ENCODE measurements at regions of chr19 and their contacts with region 1.

Region 1: GRCh38 chr19:9934132-9934950 is 2.0 kb downstream of the OLFM2 start:
- DNase-seq: peak; percentile 74 to 75 (median 74)
- ATAC-seq: peak; percentile 98
- H3K4me3 ChIP-seq: no peak overlapping the region
- H3K4me1 ChIP-seq: peaks cover 13% of the 10 kb centered on the region
- CTCF ChIP-seq: peak; percentile 63

Region 2: DNA sequence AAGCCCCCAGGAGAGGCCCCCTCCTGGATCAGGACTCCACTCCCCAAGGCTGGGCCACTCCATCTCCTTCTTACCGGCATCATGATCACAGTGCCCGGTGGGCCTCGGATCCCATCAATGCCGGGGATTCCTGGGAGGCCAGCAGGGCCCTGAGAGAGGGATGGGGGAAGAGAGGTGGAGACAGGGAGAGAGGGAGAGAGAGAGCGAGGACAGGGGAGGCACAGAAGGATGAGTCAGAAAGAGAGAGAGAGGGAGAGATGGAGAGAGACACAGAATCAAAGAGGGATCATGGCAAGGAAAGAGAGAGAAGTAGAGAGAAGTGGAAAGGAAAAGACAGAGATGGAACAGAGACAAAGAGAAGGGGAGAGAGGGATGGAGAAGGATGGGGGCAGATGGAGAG is 62.2 kb after region 1 on chr19:
- intact Hi-C with region 1: loop called in 1 of 2 experiments (anchors 10 kb)
- DNase-seq: no peak
- ATAC-seq: no peak
- H3K4me3 ChIP-seq: no peak overlapping the region
- H3K4me1 ChIP-seq: no peaks in the 10 kb centered on the region
- CTCF ChIP-seq: no peak

Region 3: DNA sequence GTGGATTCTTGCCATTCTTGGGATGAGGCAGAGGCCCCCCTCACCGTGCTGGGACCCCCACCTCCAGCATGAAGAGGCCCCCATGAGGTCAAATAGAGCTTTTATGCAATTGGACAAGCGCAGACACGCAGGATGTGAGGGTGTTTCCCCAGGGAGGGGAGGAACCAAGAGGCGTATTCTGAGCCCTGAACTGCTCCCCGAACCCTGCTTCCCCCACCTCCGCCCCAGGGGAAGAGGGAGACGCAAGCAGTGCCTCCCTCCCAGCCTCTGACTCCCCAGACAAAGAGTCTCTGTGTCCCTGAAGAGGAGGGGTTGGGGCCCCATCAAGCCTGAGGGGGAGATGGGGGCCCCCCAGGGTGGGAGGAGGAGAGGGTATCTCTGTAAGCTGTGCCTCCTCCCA is 77.6 kb after region 1 on chr19:
- intact Hi-C with region 1: no loop called
- DNase-seq: no peak
- ATAC-seq: no peak
- H3K4me3 ChIP-seq: no peak overlapping the region
- H3K4me1 ChIP-seq: peaks cover 14% of the 10 kb centered on the region
- CTCF ChIP-seq: no peak

Region 4: GRCh38 chr19:10027158-10027693 is 92.9 kb after region 1 on chr19:
- intact Hi-C with region 1: loop called (anchors 5 kb)
- DNase-seq: no peak
- ATAC-seq: peak; percentile 36
- H3K4me3 ChIP-seq: no peak overlapping the region
- H3K4me1 ChIP-seq: no peaks in the 10 kb centered on the region
- CTCF ChIP-seq: no peak